Caco-2 (cell line): ENCODE measurements at regions of chr7 and their contacts with region 1.

Region 1: GRCh38 chr7:104548868-104549267 is 220.5 kb downstream of the LHFPL3 start:
- DNase-seq: no peak
- H3K4me3 ChIP-seq: no peak overlapping the region
- H3K4me3 Mint-ChIP-seq: no peak overlapping the region
- H3K27ac Mint-ChIP-seq: no peak overlapping the region
- H3K4me1 ChIP-seq: no peaks in the 10 kb centered on the region
- H3K4me1 Mint-ChIP-seq: no peaks in the 10 kb centered on the region
- H3K27me3 ChIP-seq: no peaks in the 10 kb centered on the region
- H3K27me3 Mint-ChIP-seq: no peaks in the 10 kb centered on the region
- CTCF ChIP-seq: peak in 1 of 2 experiments; percentile 13

Region 2: DNA sequence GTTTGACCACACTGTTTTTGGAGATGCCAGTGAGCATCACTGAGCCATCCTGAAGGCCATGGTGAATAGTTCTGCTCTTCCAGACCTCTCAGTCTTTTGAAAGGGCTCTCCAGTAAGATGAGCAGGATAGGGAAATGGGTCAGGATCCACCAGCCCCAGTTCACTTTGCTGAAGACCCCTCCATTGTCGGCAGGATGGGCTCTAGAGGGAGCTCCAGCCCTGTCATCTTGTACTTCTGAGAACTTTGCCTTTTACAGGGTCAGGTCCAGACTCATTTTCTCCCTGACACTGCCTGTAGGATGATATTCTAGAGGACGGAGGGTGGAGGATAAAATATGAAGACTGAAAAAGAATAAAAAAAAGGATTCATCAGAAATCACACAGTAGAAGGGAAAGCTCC is 207.3 kb before region 1 on chr7:
- CTCF ChIA-PET with region 1: no interaction called
- POLR2A ChIA-PET with region 1: no interaction called
- intact Hi-C with region 1: loop called (anchors 5 kb)
- DNase-seq: peak; percentile 39 to 48
- H3K4me3 ChIP-seq: no peak overlapping the region
- H3K4me3 Mint-ChIP-seq: no peak overlapping the region
- H3K27ac Mint-ChIP-seq: no peak overlapping the region
- H3K4me1 ChIP-seq: no peaks in the 10 kb centered on the region
- H3K4me1 Mint-ChIP-seq: no peaks in the 10 kb centered on the region
- H3K27me3 ChIP-seq: no peaks in the 10 kb centered on the region
- H3K27me3 Mint-ChIP-seq: peaks cover 5% of the 10 kb centered on the region
- CTCF ChIP-seq: peak; percentile 28 to 61

Region 3: DNA sequence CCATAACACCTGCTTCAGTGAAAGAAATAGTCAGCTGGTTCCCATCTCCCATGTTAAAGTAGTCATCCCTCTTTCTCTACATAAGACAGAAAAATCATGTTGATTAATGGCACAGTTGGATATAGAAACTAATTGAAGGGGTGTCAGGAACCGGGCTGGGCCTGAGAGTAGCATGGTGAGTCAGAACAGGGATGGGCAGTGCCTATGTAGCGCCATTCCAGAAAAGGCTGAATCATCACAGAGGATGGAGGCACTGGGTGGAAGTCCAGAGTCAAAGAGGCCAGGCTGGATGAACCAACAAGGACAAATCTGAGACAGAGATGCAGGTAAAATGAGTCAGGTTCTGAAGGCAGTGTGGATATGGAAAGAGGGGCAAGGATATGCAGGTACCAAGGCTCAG is 19.3 kb before region 1 on chr7:
- CTCF ChIA-PET with region 1: no interaction called
- POLR2A ChIA-PET with region 1: no interaction called
- intact Hi-C with region 1: no loop called
- DNase-seq: no peak
- H3K4me3 ChIP-seq: no peak overlapping the region
- H3K4me3 Mint-ChIP-seq: no peak overlapping the region
- H3K27ac Mint-ChIP-seq: no peak overlapping the region
- H3K4me1 ChIP-seq: no peaks in the 10 kb centered on the region
- H3K4me1 Mint-ChIP-seq: no peaks in the 10 kb centered on the region
- H3K27me3 ChIP-seq: no peaks in the 10 kb centered on the region
- H3K27me3 Mint-ChIP-seq: peaks cover 15% of the 10 kb centered on the region
- CTCF ChIP-seq: no peak